ENCODE measurements at regions of chr17 and their contacts with region 1.

Region 1: DNA sequence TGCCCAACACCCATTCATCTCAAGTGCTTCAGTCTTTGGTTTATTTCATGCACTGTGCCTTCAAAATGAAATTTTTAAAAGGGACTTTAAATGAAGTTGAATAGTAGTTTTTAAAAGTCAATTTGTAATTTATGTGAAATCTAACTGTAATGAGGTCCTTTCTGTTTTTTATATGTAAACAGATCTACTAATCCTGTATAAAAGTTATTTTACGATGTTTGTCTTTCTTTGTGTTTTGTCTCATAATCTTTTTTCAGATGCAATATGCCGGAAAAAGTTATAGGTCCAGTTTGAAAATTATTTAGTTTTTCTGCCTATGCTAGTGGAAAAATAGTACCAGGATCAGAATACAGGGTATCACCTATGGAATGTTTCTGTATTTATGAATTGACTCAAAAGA is 8.7 kb upstream of the GOSR1 start:
- DNase-seq: no peak
- H3K4me3 ChIP-seq: no peak overlapping the region
- H3K27ac ChIP-seq: no peak overlapping the region
- H3K4me1 ChIP-seq: peaks cover 9% of the 10 kb centered on the region
- H3K27me3 ChIP-seq: no peaks in the 10 kb centered on the region
- CTCF ChIP-seq: no peak

Region 2: DNA sequence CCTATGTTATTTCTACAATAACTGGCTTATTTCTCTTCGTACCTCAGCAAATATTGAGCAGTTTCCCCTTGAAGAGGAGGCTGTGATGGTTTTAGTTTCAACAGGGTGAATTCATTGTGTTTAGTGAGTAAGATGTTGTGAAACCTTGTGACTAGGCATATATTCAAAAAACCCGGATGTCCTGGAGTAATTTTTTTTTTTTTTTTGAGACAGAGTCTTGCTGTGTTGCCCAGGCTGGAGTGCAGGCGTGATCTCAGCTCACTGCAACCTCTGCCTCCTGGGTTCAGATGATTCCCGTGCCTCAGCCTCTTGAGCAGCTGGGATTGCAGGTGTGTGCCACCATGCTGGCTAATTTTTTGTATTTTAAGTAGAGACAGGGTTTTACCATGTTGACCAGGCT is 78.6 kb before region 1 on chr17:
- dilution Hi-C with region 1: loop called (anchors 5 kb)
- DNase-seq: no peak
- H3K4me3 ChIP-seq: no peak overlapping the region
- H3K27ac ChIP-seq: no peak overlapping the region
- H3K4me1 ChIP-seq: no peaks in the 10 kb centered on the region
- H3K27me3 ChIP-seq: no peaks in the 10 kb centered on the region
- CTCF ChIP-seq: no peak